ENCODE measurements at regions of chr12 and their contacts with region 1.

Region 1: GRCh38 chr12:10562306-10562933 is 51.0 kb downstream of the MAGOHB start:
- DNase-seq: no peak
- H3K4me3 ChIP-seq: no peak overlapping the region
- H3K27ac ChIP-seq: no peak overlapping the region
- H3K4me1 ChIP-seq: no peaks in the 10 kb centered on the region
- H3K27me3 ChIP-seq: peaks cover 18% of the 10 kb centered on the region
- CTCF ChIP-seq: peak; percentile 81

Region 2: DNA sequence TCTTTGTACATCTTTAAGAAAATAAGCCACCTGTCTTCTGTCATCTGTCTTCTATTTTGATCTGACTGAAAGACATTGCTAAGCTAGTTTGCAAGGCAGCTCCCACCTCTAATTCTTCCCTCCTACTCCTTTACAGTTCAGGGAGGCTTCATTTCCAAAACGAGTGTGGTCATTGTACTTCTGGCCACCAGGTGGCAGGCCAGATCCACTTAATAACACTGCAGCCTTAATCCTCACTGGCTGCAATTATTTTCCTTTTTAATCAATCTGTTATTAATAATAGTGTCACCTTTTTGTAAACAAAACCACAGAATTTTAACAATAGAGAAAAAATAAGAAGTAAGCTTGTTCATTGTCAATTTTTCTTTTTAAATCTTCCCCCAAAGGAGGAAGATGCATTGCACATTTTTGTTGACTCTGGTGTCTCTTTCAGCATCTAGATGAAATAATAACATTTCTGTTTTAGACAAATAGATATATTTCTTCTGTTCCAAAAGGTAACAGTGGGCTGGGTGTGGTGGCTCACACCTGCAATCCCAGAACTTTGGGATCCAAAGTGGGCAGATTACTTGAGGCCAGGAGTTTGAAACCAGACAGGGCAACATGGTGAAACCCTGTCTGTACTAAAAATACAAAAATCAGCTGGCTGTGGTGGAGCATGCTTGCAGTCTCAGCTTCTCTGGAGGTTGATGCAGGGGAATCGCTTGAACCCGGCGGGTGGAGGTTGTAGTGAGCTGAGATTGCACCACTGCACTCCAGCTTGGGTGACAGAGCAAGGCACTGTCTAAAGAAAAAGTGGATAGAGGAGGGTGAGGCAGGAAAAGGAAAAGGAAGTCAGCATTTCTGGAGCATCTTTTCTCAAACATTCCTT is 326.4 kb before region 1 on chr12:
- intact Hi-C with region 1: loop called (anchors 5 kb)
- DNase-seq: no peak
- H3K4me3 ChIP-seq: no peak overlapping the region
- H3K27ac ChIP-seq: no peak overlapping the region
- H3K4me1 ChIP-seq: no peaks in the 10 kb centered on the region
- H3K27me3 ChIP-seq: no peaks in the 10 kb centered on the region
- CTCF ChIP-seq: peak; percentile 90

Region 3: GRCh38 chr12:10331642-10332239 is 230.7 kb before region 1 on chr12:
- intact Hi-C with region 1: loop called (anchors 5 kb)
- DNase-seq: no peak
- H3K4me3 ChIP-seq: no peak overlapping the region
- H3K27ac ChIP-seq: no peak overlapping the region
- H3K4me1 ChIP-seq: no peaks in the 10 kb centered on the region
- H3K27me3 ChIP-seq: no peaks in the 10 kb centered on the region
- CTCF ChIP-seq: peak; percentile 77